CD4-positive, alpha-beta memory T cell (primary cell): ENCODE measurements at regions of chr13 and their contacts with region 1.

Region 1: DNA sequence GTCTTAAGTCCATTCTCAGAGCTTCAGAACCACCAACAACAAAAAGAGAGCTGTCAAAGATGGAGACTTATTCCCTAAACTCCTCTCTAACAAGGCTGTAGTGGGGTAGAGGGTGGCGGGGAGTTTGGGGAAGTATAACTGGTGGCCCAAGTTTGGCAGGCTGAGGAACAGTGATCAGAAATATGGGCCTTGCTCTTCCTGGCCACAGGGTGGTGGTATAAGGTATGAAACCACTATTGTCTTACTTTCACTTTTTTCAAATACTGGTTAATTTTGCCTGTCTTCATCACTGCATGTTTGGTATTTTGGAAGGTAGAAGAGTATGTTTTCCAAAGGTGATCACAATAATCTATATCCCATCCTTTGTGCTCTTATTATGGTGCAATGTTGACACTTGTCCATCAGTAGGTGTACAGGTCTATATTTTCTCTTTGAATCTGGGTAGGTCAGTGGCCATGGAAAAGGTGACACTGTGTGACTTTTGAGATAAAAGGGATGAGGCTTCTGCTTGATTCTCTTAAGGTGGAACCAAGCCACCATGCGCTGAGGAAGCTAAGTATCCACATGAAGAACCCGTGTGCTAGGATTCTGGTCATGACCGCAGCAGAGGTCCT is 23.2 kb upstream of the GPC5 start:
- DNase-seq: peak in 4 of 5 donors; percentile 8 to 26 (median 14)
- H3K4me3 ChIP-seq: no peak overlapping the region
- H3K4me3 Mint-ChIP-seq: no peak overlapping the region
- H3K27ac ChIP-seq: no peak overlapping the region
- H3K27ac Mint-ChIP-seq: no peak overlapping the region
- H3K4me1 ChIP-seq: no peaks in the 10 kb centered on the region
- H3K4me1 Mint-ChIP-seq: peaks cover 0 to 5% (median 3%) of the 10 kb centered on the region in 4 donors
- H3K27me3 ChIP-seq: no peaks in the 10 kb centered on the region
- H3K27me3 Mint-ChIP-seq: peaks cover 4 to 7% of the 10 kb centered on the region in 2 donors

Region 2: DNA sequence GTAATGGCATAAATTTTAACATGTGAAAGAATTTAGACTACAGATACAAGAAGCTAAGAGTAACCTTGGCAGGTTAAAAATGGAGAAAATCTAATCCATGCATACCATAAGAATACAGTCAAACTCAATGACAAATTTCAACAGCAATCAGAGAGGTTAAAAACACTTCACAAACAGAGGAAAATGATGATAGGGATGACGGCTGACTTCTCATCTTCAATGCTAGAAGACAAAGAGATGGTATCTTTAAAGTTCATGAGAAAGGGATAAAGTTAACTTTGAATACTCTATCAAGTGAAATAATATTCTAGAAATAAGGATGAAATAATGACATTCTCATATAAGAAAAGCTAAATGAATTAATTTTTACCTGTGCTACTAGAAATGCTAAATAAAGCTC is 1157.9 kb before region 1 on chr13:
- CTCF ChIA-PET with region 1: no interaction called
- POLR2A ChIA-PET with region 1: no interaction called
- intact Hi-C with region 1: no loop called
- DNase-seq: no peak
- H3K4me3 ChIP-seq: no peak overlapping the region
- H3K4me3 Mint-ChIP-seq: no peak overlapping the region
- H3K27ac ChIP-seq: no peak overlapping the region
- H3K27ac Mint-ChIP-seq: no peak overlapping the region
- H3K4me1 ChIP-seq: no peaks in the 10 kb centered on the region
- H3K4me1 Mint-ChIP-seq: no peaks in the 10 kb centered on the region
- H3K27me3 ChIP-seq: no peaks in the 10 kb centered on the region
- H3K27me3 Mint-ChIP-seq: no peaks in the 10 kb centered on the region

Region 3: DNA sequence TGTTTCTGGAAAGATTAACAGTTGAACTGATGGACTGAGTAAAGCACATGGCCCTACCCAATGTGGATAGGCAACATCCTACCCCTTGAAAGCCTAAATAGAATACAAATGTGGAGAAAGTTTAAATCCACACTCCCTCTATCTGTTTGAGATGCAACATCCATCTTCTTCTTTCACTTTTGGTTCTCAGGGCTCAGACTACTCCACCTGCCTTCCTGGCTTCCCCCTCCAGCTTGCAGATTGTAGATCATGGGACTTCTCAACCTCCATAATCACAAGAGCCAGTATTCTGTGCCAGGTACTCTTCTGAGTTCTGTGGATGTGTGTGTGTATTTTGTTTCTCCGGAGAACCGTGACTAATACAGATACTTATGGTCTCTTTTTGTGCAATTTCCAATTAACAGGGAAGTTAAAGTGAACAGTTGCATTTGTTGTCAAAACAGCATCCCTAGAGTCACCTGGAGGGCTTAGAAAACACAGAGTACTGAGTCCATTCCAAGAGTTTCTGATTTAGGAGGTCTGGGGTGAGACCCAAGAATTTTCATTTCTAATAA is 618.0 kb before region 1 on chr13:
- CTCF ChIA-PET with region 1: no interaction called
- POLR2A ChIA-PET with region 1: no interaction called
- intact Hi-C with region 1: no loop called
- DNase-seq: no peak
- H3K4me3 ChIP-seq: no peak overlapping the region
- H3K4me3 Mint-ChIP-seq: no peak overlapping the region
- H3K27ac ChIP-seq: no peak overlapping the region
- H3K27ac Mint-ChIP-seq: no peak overlapping the region
- H3K4me1 ChIP-seq: no peaks in the 10 kb centered on the region
- H3K4me1 Mint-ChIP-seq: no peaks in the 10 kb centered on the region
- H3K27me3 ChIP-seq: no peaks in the 10 kb centered on the region
- H3K27me3 Mint-ChIP-seq: no peaks in the 10 kb centered on the region

Region 4: GRCh38 chr13:91278888-91279287 is 96.3 kb before region 1 on chr13:
- CTCF ChIA-PET with region 1: no interaction called
- POLR2A ChIA-PET with region 1: no interaction called
- intact Hi-C with region 1: no loop called
- DNase-seq: no peak
- H3K4me3 ChIP-seq: no peak overlapping the region
- H3K4me3 Mint-ChIP-seq: no peak overlapping the region
- H3K27ac ChIP-seq: no peak overlapping the region
- H3K27ac Mint-ChIP-seq: no peak overlapping the region
- H3K4me1 ChIP-seq: no peaks in the 10 kb centered on the region
- H3K4me1 Mint-ChIP-seq: no peaks in the 10 kb centered on the region
- H3K27me3 ChIP-seq: no peaks in the 10 kb centered on the region
- H3K27me3 Mint-ChIP-seq: peaks cover 2 to 5% of the 10 kb centered on the region in 2 donors

Region 5: GRCh38 chr13:91406619-91407018 is 31.4 kb after region 1 on chr13:
- CTCF ChIA-PET with region 1: interaction called, 10 read pairs
- POLR2A ChIA-PET with region 1: no interaction called
- intact Hi-C with region 1: loop called (anchors 1 kb)
- DNase-seq: peak; percentile 19 to 24 (median 22)
- H3K4me3 ChIP-seq: no peak overlapping the region
- H3K4me3 Mint-ChIP-seq: no peak overlapping the region
- H3K27ac ChIP-seq: no peak overlapping the region
- H3K27ac Mint-ChIP-seq: no peak overlapping the region
- H3K4me1 ChIP-seq: no peaks in the 10 kb centered on the region
- H3K4me1 Mint-ChIP-seq: peaks cover 0 to 2% (median 0%) of the 10 kb centered on the region in 4 donors
- H3K27me3 ChIP-seq: peaks cover 3% of the 10 kb centered on the region
- H3K27me3 Mint-ChIP-seq: peaks cover 10 to 15% of the 10 kb centered on the region in 2 donors

Region 6: GRCh38 chr13:91722267-91722884 is 347.2 kb after region 1 on chr13:
- CTCF ChIA-PET with region 1: interaction called, 4 read pairs
- POLR2A ChIA-PET with region 1: no interaction called
- intact Hi-C with region 1: loop called (anchors 1 kb)
- DNase-seq: peak in 4 of 5 donors; percentile 1 to 15 (median 10)
- H3K4me3 ChIP-seq: no peak overlapping the region
- H3K4me3 Mint-ChIP-seq: no peak overlapping the region
- H3K27ac ChIP-seq: no peak overlapping the region
- H3K27ac Mint-ChIP-seq: no peak overlapping the region
- H3K4me1 ChIP-seq: no peaks in the 10 kb centered on the region
- H3K4me1 Mint-ChIP-seq: no peaks in the 10 kb centered on the region
- H3K27me3 ChIP-seq: no peaks in the 10 kb centered on the region
- H3K27me3 Mint-ChIP-seq: no peaks in the 10 kb centered on the region

Region 7: DNA sequence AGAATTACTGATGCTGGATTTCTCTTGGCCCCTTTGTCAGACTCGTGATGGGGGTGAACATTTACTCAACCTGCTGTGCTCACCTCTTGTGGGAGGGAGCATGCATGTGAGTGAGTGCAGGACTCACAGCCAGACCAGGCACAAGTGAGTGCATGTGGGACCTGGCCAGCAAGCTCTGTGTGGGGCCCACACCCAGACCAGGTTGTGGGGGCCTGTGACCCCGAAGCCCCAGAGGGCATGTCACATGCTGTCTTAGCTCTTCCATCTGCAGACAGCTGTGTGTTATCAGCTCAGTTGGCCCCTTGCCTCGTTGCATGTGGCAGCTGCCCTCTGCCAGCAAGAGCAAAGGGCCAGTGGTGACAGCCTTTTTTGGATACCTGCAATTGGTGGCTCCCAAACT is 637.6 kb after region 1 on chr13:
- CTCF ChIA-PET with region 1: no interaction called
- POLR2A ChIA-PET with region 1: no interaction called
- intact Hi-C with region 1: no loop called
- DNase-seq: no peak
- H3K4me3 ChIP-seq: no peak overlapping the region
- H3K4me3 Mint-ChIP-seq: no peak overlapping the region
- H3K27ac ChIP-seq: no peak overlapping the region
- H3K27ac Mint-ChIP-seq: no peak overlapping the region
- H3K4me1 ChIP-seq: no peaks in the 10 kb centered on the region
- H3K4me1 Mint-ChIP-seq: no peaks in the 10 kb centered on the region
- H3K27me3 ChIP-seq: no peaks in the 10 kb centered on the region
- H3K27me3 Mint-ChIP-seq: no peaks in the 10 kb centered on the region